ENCODE measurements at regions of chr2 and their contacts with region 1.

Region 1: DNA sequence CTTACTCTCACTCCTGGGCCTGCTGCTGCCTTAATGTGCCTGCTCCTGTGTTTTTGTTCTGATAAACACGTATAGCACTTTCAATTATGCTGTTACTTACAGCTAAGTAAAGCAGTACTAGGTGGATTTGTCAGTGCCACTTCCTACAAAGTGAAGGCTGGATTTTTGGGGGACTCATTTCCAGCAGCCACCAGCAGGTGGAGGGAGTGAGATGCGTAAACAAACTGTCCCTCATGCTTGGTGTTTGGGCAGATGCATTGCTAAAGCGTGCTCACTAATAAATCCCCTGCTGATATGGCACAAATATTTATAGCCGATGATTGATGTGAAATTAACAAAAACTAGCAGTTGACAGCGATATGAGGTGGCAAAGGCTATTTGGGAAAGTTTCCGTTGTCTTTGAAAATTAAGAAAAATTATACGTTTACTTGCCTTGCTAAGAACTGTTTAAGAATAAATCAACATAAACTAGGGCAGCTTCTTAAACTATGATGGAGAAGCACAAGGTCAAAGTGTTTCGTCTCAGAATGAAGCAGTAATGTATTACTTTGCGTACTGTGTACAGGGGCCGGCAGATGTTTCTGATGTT is 101.7 kb downstream of the AGAP1 start:
- DNase-seq: peak in 2 of 4 donors; percentile 66 to 74
- ATAC-seq: peak; percentile 74
- H3K4me3 ChIP-seq: no peak overlapping the region
- H3K27ac ChIP-seq: no peak overlapping the region
- H3K4me1 ChIP-seq: no peaks in the 10 kb centered on the region
- H3K27me3 ChIP-seq: no peaks in the 10 kb centered on the region
- CTCF ChIP-seq: peak; percentile 68 to 85

Region 2: GRCh38 chr2:235135990-235136561 is 459.4 kb before region 1 on chr2:
- intact Hi-C with region 1: loop called in 1 of 2 experiments (anchors 5 kb)
- DNase-seq: peak in 3 of 4 donors; percentile 51 to 83 (median 61)
- ATAC-seq: peak; percentile 94
- H3K4me3 ChIP-seq: no peak overlapping the region
- H3K27ac ChIP-seq: no peak overlapping the region
- H3K4me1 ChIP-seq: no peaks in the 10 kb centered on the region
- H3K27me3 ChIP-seq: no peaks in the 10 kb centered on the region
- CTCF ChIP-seq: peak; percentile 73 to 75

Region 3: DNA sequence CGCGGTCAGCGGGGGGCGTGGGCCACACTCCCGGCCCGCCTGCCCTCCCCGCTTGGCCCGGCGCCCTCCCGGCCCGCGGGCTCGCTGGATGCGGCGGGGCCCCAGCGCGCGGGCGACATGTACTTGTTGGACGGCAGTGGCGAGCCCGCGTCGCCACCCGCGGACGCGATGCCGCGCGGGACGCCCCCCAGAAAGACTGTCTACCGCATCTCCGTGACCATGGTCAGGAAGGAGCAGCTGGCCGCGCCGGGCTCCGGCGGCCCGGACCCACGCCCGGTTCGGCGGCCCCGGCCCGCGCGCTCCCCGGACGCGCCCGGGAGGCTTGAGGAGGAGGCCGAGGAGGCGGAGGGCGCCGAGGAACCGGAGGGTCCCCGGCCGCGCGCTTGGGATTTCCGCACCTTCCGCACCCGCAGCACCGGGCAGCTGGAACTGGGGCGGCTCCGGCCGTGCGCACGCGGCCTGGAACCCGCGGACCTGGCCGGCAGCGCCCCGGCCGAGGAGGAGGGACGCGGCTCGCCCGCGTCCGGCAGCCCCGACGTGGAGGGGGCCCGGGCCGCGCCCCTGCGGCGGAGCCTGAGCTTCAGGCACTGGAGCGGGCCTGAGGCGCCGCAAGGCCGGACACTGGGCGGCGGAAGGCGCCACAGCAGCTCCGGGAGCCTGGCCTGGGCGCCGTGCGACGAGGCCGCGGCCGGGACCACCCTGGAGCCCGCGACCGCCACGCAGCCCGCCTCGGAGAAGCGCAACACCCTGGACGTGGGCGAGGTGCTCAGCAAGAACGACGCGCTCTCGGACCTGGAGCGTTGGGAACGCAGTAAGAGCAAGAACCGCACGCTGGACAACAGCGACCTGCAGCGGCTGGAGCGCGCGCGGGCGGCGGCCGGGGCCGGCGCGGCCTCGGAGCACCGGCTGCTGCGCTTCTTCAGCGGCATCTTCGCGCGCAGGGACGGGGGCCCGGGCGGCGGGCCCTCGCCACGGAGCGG is 74.8 kb after region 1 on chr2:
- intact Hi-C with region 1: loop called in 1 of 2 experiments (anchors 5 kb)
- DNase-seq: peak in 3 of 4 donors; percentile 60 to 77 (median 65)
- ATAC-seq: peak; percentile 82
- H3K4me3 ChIP-seq: peak overlapping the region; percentile 32 to 42
- H3K27ac ChIP-seq: no peak overlapping the region
- H3K4me1 ChIP-seq: peaks cover 4 to 20% of the 10 kb centered on the region in 2 donors
- H3K27me3 ChIP-seq: peaks cover 0 to 79% of the 10 kb centered on the region in 2 donors
- CTCF ChIP-seq: peak; percentile 32 to 42

Region 4: GRCh38 chr2:235746257-235747084 is 151.0 kb after region 1 on chr2:
- intact Hi-C with region 1: loop called (anchors 5 to 10 kb)
- DNase-seq: peak in 2 of 4 donors; percentile 65 to 87
- ATAC-seq: peak; percentile 97
- H3K4me3 ChIP-seq: no peak overlapping the region
- H3K27ac ChIP-seq: no peak overlapping the region
- H3K4me1 ChIP-seq: no peaks in the 10 kb centered on the region
- H3K27me3 ChIP-seq: no peaks in the 10 kb centered on the region
- CTCF ChIP-seq: peak; percentile 78 to 81

Measured in left lung (tissue), 14 donors.